ENCODE measurements at regions of chr1 and their contacts with region 1.

Region 1: GRCh38 chr1:23800400-23801337 is at the start of gene GALE:
- DNase-seq: peak; percentile 98
- ATAC-seq: peak; percentile 94
- H3K4me3 ChIP-seq: peak within 1 kb of the TSS; percentile 39 to 99 (median 80)
- H3K4me3 Mint-ChIP-seq: peak within 1 kb of the TSS; percentile 95
- H3K27ac ChIP-seq: peak within 1 kb of the TSS; percentile 79 to 93
- H3K27ac Mint-ChIP-seq: peak within 1 kb of the TSS; percentile 87
- H3K4me1 ChIP-seq: peaks cover 15 to 20% of the 10 kb centered on the region in 2 donors
- H3K4me1 Mint-ChIP-seq: peaks cover 18% of the 10 kb centered on the region
- H3K27me3 ChIP-seq: no peaks in the 10 kb centered on the region
- H3K27me3 Mint-ChIP-seq: no peaks in the 10 kb centered on the region
- CTCF ChIP-seq: no peak
- total RNA-seq, gene GALE: 12.1 TPM in 2 replicates

Region 2: GRCh38 chr1:23273450-23274133 is 527.1 kb before region 1 on chr1:
- CTCF ChIA-PET with region 1: no interaction called
- POLR2A ChIA-PET with region 1: no interaction called
- intact Hi-C with region 1: no loop called
- DNase-seq: no peak
- ATAC-seq: no peak
- H3K4me3 ChIP-seq: no peak overlapping the region
- H3K4me3 Mint-ChIP-seq: no peak overlapping the region
- H3K27ac ChIP-seq: no peak overlapping the region
- H3K27ac Mint-ChIP-seq: no peak overlapping the region
- H3K4me1 ChIP-seq: no peaks in the 10 kb centered on the region
- H3K4me1 Mint-ChIP-seq: no peaks in the 10 kb centered on the region
- H3K27me3 ChIP-seq: peaks cover 0 to 13% (median 5%) of the 10 kb centered on the region in 4 experiments
- H3K27me3 Mint-ChIP-seq: peaks cover 38% of the 10 kb centered on the region
- CTCF ChIP-seq: no peak

Region 3: DNA sequence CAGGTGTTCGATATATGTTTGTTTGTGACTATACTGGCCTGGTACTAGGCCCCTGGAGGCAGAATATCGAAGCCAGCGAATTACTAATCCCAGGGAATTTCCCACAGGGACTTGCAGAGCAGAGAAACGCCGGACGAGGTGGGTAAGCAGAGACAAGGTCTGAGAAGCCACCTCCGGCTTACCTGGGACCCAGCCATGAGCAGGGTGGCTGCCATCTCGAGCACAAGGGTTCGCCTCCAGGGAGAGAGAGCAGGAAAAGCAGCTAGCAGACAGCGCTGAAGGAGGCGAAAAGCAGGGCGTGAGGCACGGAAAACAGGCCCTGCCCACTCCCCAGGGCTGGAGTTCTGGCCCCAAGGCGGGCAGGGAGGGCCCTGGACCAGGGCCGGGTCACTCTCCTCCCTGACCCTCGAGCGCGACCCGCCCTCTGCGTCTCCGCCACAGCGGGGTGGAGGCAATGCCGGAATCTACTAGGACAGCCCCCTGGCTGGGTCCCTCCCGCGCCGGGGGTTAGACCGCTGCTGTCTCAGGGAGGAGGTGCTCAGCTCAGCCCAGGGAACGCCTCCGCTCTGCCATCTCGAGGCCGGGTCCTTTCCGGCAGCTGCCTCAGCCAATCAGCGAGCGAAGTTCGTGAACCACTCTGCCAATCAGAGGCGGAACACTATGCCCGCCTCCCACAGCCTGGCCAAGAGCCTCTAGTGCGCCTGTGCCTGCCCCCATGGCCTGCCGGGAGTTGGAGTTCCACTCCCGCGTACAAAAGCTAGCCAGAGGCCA is 432.7 kb before region 1 on chr1:
- CTCF ChIA-PET with region 1: no interaction called
- POLR2A ChIA-PET with region 1: no interaction called
- intact Hi-C with region 1: loop called (anchors 1 kb)
- DNase-seq: peak; percentile 98
- ATAC-seq: peak; percentile 87
- H3K4me3 ChIP-seq: peak overlapping the region; percentile 93 to 100 (median 97)
- H3K4me3 Mint-ChIP-seq: peak overlapping the region; percentile 98
- H3K27ac ChIP-seq: peak overlapping the region; percentile 81 to 85
- H3K27ac Mint-ChIP-seq: peak overlapping the region; percentile 99
- H3K4me1 ChIP-seq: peaks cover 12 to 19% of the 10 kb centered on the region in 2 donors
- H3K4me1 Mint-ChIP-seq: peaks cover 33% of the 10 kb centered on the region
- H3K27me3 ChIP-seq: no peaks in the 10 kb centered on the region
- H3K27me3 Mint-ChIP-seq: no peaks in the 10 kb centered on the region
- CTCF ChIP-seq: no peak

Region 4: GRCh38 chr1:23743287-23744052 is 57.2 kb before region 1 on chr1 and contains the start of gene ELOA:
- CTCF ChIA-PET with region 1: interaction called, 3 read pairs
- POLR2A ChIA-PET with region 1: interaction called, 5 read pairs
- intact Hi-C with region 1: loop called (anchors 2 kb)
- DNase-seq: peak; percentile 84
- ATAC-seq: peak; percentile 91
- H3K4me3 ChIP-seq: peak within 1 kb of the TSS; percentile 72 to 92 (median 86)
- H3K4me3 Mint-ChIP-seq: peak within 1 kb of the TSS; percentile 93
- H3K27ac ChIP-seq: peak within 1 kb of the TSS; percentile 68 to 88
- H3K27ac Mint-ChIP-seq: peak within 1 kb of the TSS; percentile 94
- H3K4me1 ChIP-seq: peaks cover 22 to 36% of the 10 kb centered on the region in 2 donors
- H3K4me1 Mint-ChIP-seq: peaks cover 50% of the 10 kb centered on the region
- H3K27me3 ChIP-seq: no peaks in the 10 kb centered on the region
- H3K27me3 Mint-ChIP-seq: no peaks in the 10 kb centered on the region
- CTCF ChIP-seq: no peak
- total RNA-seq, gene ELOA: 53.0 and 56.6 TPM in 2 replicates

Region 5: DNA sequence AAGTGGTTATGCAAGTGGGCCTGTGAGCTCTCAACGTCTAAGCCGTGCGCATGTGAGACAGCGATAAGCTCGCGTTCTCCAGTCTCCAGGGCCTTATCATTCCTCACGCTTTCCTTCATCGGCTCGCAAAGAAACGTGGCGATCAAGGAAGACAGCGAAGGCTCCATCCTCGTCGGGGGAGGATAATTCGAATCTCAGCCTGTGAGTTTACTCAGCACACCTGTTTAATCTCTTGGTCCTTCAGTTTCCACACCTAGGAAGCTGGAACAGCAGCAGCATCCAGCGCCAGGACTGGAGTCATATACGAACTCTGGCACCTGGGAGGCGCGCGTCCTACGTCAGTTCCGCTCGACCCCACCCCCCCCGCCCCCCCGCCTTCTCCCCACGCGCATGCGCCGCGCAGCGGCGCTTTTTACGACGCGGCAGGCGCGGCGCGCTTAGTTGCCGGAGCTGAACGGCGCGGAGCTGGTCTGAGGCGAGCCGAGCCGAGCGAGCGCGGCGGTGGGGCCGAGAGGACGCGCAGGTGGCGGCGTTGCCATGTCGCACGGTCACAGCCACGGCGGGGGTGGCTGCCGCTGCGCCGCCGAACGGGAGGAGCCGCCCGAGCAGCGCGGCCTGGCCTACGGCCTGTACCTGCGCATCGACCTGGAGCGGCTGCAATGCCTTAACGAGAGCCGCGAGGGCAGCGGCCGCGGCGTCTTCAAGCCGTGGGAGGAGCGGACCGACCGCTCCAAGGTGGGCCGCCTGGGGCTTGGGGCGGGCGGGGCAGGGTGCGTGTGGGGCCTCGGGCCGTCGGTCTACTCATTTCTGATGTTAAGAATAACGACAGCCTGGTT is 22.5 kb before region 1 on chr1 and contains the start of gene PITHD1:
- CTCF ChIA-PET with region 1: interaction called, 5 read pairs
- POLR2A ChIA-PET with region 1: interaction called, 7 read pairs
- intact Hi-C with region 1: loop called (anchors 1 kb)
- DNase-seq: peak; percentile 92
- ATAC-seq: peak; percentile 88
- H3K4me3 ChIP-seq: peak within 1 kb of the TSS; percentile 60 to 91 (median 86)
- H3K4me3 Mint-ChIP-seq: peak within 1 kb of the TSS; percentile 91
- H3K27ac ChIP-seq: peak within 1 kb of the TSS; percentile 67 to 86
- H3K27ac Mint-ChIP-seq: peak within 1 kb of the TSS; percentile 90
- H3K4me1 ChIP-seq: peaks cover 15 to 20% of the 10 kb centered on the region in 2 donors
- H3K4me1 Mint-ChIP-seq: peaks cover 30% of the 10 kb centered on the region
- H3K27me3 ChIP-seq: no peaks in the 10 kb centered on the region
- H3K27me3 Mint-ChIP-seq: no peaks in the 10 kb centered on the region
- CTCF ChIP-seq: no peak
- total RNA-seq, gene PITHD1: 56.7 and 62.2 TPM in 2 replicates

Region 6: DNA sequence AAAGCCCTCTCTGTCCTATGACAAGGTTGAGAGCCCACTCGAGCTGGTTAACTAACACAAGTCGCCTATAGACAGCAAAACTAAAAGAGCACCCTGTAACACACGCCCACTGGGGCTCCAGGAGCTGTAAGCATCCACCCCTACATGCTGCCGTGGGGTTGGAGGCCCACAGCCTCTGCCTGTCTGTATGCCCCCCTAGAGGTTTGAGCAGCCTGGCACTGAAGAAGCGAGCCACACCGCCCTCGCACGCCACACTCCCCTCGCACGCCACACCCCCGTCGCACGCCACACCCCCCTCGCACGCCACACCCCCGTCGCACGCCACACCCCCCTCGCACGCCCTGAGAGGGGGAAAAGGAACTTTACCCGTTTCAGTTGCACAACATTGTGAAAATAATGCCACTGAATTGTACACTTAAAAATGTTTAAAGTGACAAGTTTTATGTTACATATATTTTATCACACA is 37.8 kb after region 1 on chr1:
- CTCF ChIA-PET with region 1: no interaction called
- POLR2A ChIA-PET with region 1: no interaction called
- intact Hi-C with region 1: loop called (anchors 1 kb)
- DNase-seq: peak; percentile 89
- ATAC-seq: peak; percentile 100
- H3K4me3 ChIP-seq: peak overlapping the region in 4 of 5 experiments; percentile 19 to 60 (median 40)
- H3K4me3 Mint-ChIP-seq: peak overlapping the region; percentile 88
- H3K27ac ChIP-seq: no peak overlapping the region
- H3K27ac Mint-ChIP-seq: peak overlapping the region; percentile 83
- H3K4me1 ChIP-seq: peaks cover 6 to 7% of the 10 kb centered on the region in 2 donors
- H3K4me1 Mint-ChIP-seq: peaks cover 11% of the 10 kb centered on the region
- H3K27me3 ChIP-seq: no peaks in the 10 kb centered on the region
- H3K27me3 Mint-ChIP-seq: no peaks in the 10 kb centered on the region
- CTCF ChIP-seq: peak; percentile 3

Region 7: GRCh38 chr1:23895082-23895481 is 94.4 kb after region 1 on chr1:
- CTCF ChIA-PET with region 1: no interaction called
- POLR2A ChIA-PET with region 1: no interaction called
- intact Hi-C with region 1: no loop called
- DNase-seq: no peak
- ATAC-seq: no peak
- H3K4me3 ChIP-seq: no peak overlapping the region
- H3K4me3 Mint-ChIP-seq: no peak overlapping the region
- H3K27ac ChIP-seq: peak overlapping the region in 1 of 2 donors; percentile 72
- H3K27ac Mint-ChIP-seq: peak overlapping the region; percentile 84
- H3K4me1 ChIP-seq: peaks cover 76 to 85% of the 10 kb centered on the region in 2 donors
- H3K4me1 Mint-ChIP-seq: peaks cover 77% of the 10 kb centered on the region
- H3K27me3 ChIP-seq: no peaks in the 10 kb centered on the region
- H3K27me3 Mint-ChIP-seq: no peaks in the 10 kb centered on the region
- CTCF ChIP-seq: no peak

Region 8: GRCh38 chr1:23979878-23980724 is 179.4 kb after region 1 on chr1 and contains the start of gene SRSF10:
- CTCF ChIA-PET with region 1: no interaction called
- POLR2A ChIA-PET with region 1: no interaction called
- intact Hi-C with region 1: loop called (anchors 1 kb)
- DNase-seq: peak; percentile 100
- ATAC-seq: peak; percentile 96
- H3K4me3 ChIP-seq: peak within 1 kb of the TSS; percentile 84 to 96 (median 89)
- H3K4me3 Mint-ChIP-seq: peak within 1 kb of the TSS; percentile 91
- H3K27ac ChIP-seq: peak within 1 kb of the TSS; percentile 97
- H3K27ac Mint-ChIP-seq: peak within 1 kb of the TSS; percentile 95
- H3K4me1 ChIP-seq: peaks cover 32 to 41% of the 10 kb centered on the region in 2 donors
- H3K4me1 Mint-ChIP-seq: peaks cover 49% of the 10 kb centered on the region
- H3K27me3 ChIP-seq: no peaks in the 10 kb centered on the region
- H3K27me3 Mint-ChIP-seq: no peaks in the 10 kb centered on the region
- CTCF ChIP-seq: peak; percentile 42
- total RNA-seq, gene SRSF10: 213 and 223 TPM in 2 replicates